A673 (cell line): ENCODE measurements at regions of chr14 and their contacts with region 1.

Region 1: DNA sequence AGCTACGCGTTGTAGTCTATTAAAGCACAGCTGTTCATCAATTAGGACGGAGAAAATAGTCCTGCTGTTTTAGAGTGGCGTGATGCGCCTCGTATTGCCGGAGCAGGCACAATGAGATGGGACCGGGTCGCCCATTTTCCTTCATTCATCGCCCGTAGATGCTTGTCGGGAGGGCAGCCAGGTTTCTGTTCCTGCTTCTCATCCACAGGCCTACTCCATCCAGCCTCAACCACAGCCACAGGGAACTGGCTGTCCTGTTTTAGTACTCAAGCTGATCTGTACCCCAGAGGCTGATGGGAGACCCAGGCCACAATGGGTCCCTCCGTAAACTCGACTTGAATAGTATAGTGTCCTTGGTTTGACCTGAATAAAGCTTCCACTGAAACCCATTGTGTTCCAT is 264.0 kb downstream of the VRK1 start:
- DNase-seq: no peak
- H3K4me3 ChIP-seq: no peak overlapping the region
- H3K27ac ChIP-seq: peak overlapping the region; percentile 22
- H3K4me1 ChIP-seq: peaks cover 42% of the 10 kb centered on the region
- H3K27me3 ChIP-seq: no peaks in the 10 kb centered on the region
- CTCF ChIP-seq: no peak

Region 2: DNA sequence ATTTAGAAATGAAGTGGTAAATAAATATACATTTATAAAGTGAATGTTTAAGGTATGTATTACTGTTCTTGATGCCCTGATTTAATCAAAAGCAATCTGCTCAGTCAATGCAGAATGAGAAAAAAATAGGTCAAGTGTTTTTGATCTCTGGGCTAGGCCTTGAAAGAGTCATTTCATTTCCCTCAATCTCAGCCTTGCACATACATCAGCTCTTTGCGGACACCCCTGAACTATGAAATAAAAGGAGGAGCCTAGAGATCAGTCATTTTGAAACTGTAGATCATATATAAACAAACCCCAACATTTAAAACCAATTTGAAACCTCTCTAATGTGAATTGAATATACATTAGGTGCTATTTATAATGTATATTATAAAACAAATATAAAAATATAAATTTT is 740.6 kb before region 1 on chr14:
- CTCF ChIA-PET with region 1: no interaction called
- POLR2A ChIA-PET with region 1: no interaction called
- intact Hi-C with region 1: no loop called
- DNase-seq: no peak
- H3K4me3 ChIP-seq: no peak overlapping the region
- H3K27ac ChIP-seq: no peak overlapping the region
- H3K4me1 ChIP-seq: no peaks in the 10 kb centered on the region
- H3K27me3 ChIP-seq: no peaks in the 10 kb centered on the region
- CTCF ChIP-seq: no peak

Region 3: GRCh38 chr14:96479435-96480146 is 581.6 kb before region 1 on chr14:
- CTCF ChIA-PET with region 1: no interaction called
- POLR2A ChIA-PET with region 1: no interaction called
- intact Hi-C with region 1: loop called (anchors 1 kb)
- DNase-seq: peak; percentile 50
- H3K4me3 ChIP-seq: peak overlapping the region; percentile 54
- H3K27ac ChIP-seq: peak overlapping the region; percentile 74
- H3K4me1 ChIP-seq: peaks cover 19% of the 10 kb centered on the region
- H3K27me3 ChIP-seq: no peaks in the 10 kb centered on the region
- CTCF ChIP-seq: no peak

Region 4: GRCh38 chr14:97149775-97150174 is 88.6 kb after region 1 on chr14:
- CTCF ChIA-PET with region 1: interaction called, 3 read pairs
- POLR2A ChIA-PET with region 1: interaction called, 3 read pairs
- intact Hi-C with region 1: loop called (anchors 5 kb)
- DNase-seq: no peak
- H3K4me3 ChIP-seq: no peak overlapping the region
- H3K27ac ChIP-seq: peak overlapping the region; percentile 35
- H3K4me1 ChIP-seq: peaks cover 9% of the 10 kb centered on the region
- H3K27me3 ChIP-seq: no peaks in the 10 kb centered on the region
- CTCF ChIP-seq: no peak

Region 5: DNA sequence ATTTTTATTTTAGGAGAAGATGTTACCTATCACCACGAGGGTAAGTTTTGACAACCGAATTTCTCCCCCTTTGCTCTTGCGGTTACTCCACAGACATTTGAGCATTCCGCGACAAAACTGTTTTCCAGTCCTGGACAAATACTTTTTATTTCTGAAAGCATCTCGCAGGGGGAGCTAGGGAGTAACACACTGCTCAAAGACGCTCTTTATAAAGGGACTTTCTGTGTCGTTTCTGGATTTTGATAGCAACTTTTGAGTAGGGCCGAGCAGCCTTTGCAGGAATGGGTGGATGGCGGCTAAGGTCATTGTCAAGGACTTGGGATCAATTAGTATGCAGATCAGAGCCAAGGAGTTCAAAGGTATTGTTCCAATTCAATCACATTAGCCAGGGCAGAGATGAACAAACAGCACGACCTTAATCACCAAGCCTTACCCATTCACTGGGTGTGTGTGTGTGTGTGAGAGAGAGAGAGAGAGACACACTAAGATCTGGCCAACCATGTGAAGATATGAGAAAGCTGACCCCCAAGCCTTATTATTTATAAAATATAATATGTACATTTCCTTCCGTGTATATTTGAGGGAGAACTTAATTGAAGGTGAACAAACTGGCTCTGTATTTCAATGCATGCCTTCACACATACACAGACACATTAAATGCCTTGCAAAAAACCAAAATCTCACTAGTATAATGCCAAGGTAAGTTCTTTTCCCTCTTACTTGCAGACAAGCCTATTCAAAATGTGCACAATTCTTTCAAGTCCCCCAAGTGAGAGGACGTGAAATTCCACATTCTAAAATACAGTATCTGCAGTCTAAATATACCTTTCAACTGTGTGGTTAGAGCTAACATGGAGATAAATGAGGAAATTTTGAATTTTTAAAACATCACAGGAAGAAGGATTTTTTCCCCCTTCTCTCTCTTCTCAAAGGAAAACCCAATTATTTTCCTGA is 349.7 kb after region 1 on chr14:
- CTCF ChIA-PET with region 1: no interaction called
- POLR2A ChIA-PET with region 1: no interaction called
- intact Hi-C with region 1: loop called (anchors 5 kb)
- DNase-seq: peak; percentile 84
- H3K4me3 ChIP-seq: peak overlapping the region; percentile 44
- H3K27ac ChIP-seq: peak overlapping the region; percentile 85
- H3K4me1 ChIP-seq: peaks cover 78% of the 10 kb centered on the region
- H3K27me3 ChIP-seq: no peaks in the 10 kb centered on the region
- CTCF ChIP-seq: peak; percentile 63

Region 6: GRCh38 chr14:98494582-98494981 is 1433.4 kb after region 1 on chr14:
- CTCF ChIA-PET with region 1: no interaction called
- POLR2A ChIA-PET with region 1: no interaction called
- intact Hi-C with region 1: loop called (anchors 10 kb)
- DNase-seq: peak; percentile 52
- H3K4me3 ChIP-seq: no peak overlapping the region
- H3K27ac ChIP-seq: no peak overlapping the region
- H3K4me1 ChIP-seq: peaks cover 25% of the 10 kb centered on the region
- H3K27me3 ChIP-seq: no peaks in the 10 kb centered on the region
- CTCF ChIP-seq: no peak